A549 (cell line): ENCODE measurements at regions of chr11 and their contacts with region 1.

Region 1: DNA sequence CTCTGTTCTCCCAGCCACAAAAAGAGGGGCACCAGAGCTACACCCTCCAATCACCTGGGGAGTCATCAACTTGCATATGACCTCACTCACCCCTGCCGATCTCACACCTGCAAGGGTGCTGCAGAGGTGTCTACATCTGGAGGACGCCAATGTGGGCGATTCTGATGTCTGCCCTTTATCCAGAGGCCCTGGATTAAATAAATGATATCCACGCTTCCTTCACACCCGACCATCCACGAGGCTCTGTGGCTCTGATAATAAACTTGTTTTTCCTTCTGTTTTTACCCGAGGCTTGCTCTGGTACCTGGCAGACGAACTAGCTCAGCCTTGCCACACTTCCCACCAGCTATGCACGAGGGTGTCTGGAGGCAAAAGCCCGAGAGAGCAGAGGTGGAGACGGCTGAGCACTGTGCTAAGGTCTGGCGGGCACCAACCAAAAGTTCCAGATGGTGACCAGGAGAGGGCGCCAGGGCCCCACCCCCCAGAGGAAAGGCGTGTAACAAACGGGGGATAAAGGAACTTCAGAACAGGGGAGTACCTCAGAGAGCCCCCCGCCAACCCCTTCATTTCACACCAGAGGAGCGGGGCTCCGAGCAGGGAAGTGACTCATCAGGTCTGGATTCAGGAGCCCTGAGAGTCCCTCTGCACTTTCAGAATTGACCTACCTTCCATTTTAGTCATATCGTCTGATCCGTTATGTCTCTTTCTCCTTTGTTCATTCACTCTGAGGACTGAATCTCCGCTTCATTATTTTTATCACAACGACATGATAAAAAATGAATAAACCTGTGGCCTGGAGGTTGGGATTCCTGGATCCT is 13.5 kb downstream of the SCN3B start:
- DNase-seq: peak; percentile 35 to 43
- ATAC-seq: peak; percentile 84 to 97
- H3K4me3 ChIP-seq: no peak overlapping the region
- H3K27ac ChIP-seq: no peak overlapping the region
- H3K4me1 ChIP-seq: no peaks in the 10 kb centered on the region
- CTCF ChIP-seq: peak; percentile 71
- EP300 ChIP-seq: no peak
- POLR2A ChIP-seq: no peak
- RAD21 ChIP-seq: peak; percentile 79 to 83

Region 2: DNA sequence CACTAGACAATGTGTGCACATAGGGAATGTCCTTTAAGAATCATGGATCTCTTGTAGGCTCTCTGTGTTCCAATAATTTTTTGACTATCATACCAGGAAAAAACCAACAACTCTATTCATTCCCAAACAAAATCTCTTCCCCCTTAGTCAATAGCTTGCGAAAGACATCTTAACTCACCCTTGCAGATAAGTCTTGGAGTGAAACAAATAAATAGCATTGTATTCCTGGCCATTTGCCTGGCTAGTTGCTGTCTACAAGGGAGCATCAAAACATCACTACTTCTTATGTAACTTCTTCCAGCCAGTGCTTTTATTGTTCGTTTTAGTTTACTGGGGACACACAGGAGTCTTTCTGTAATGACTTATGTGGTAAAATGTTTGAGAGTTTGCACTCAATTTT is 15.9 kb before region 1 on chr11:
- CTCF ChIA-PET with region 1: interaction called, 21 read pairs
- POLR2A ChIA-PET with region 1: no interaction called
- DNase-seq: no peak
- ATAC-seq: no peak
- H3K4me3 ChIP-seq: no peak overlapping the region
- H3K27ac ChIP-seq: no peak overlapping the region
- H3K4me1 ChIP-seq: peaks cover 14% of the 10 kb centered on the region
- CTCF ChIP-seq: no peak
- EP300 ChIP-seq: no peak
- POLR2A ChIP-seq: no peak
- RAD21 ChIP-seq: no peak

Region 3: GRCh38 chr11:123654566-123655081 is 13.7 kb after region 1 on chr11 and contains the start of gene SCN3B:
- CTCF ChIA-PET with region 1: interaction called, 52 read pairs
- POLR2A ChIA-PET with region 1: interaction called, 3 read pairs
- DNase-seq: peak; percentile 69 to 72
- ATAC-seq: peak; percentile 95 to 98
- H3K4me3 ChIP-seq: peak within 1 kb of the TSS; percentile 73
- H3K27ac ChIP-seq: peak within 1 kb of the TSS in 1 of 2 experiments; percentile 65; a peak in 3 of 6 replicates
- H3K4me1 ChIP-seq: peaks cover 3% of the 10 kb centered on the region; the same call in 1 of the 3 replicates
- CTCF ChIP-seq: no peak
- EP300 ChIP-seq: no peak
- POLR2A ChIP-seq: no peak
- RAD21 ChIP-seq: no peak
- polyA plus RNA-seq, gene SCN3B: 0.37 and 0.40 TPM in 2 replicates